ENCODE measurements at regions of chr9 and their contacts with region 1.

Region 1: GRCh38 chr9:89597711-89598625 is 6.8 kb upstream of the GADD45G start:
- DNase-seq: peak in 1 of 2 experiments; percentile 82
- H3K4me3 ChIP-seq: no peak overlapping the region
- H3K27ac ChIP-seq: no peak overlapping the region
- H3K4me1 ChIP-seq: peaks cover 4 to 10% (median 6%) of the 10 kb centered on the region in 4 experiments
- H3K27me3 ChIP-seq: no peaks in the 10 kb centered on the region
- CTCF ChIP-seq: peak; percentile 68 to 92 (median 92)
- EP300 ChIP-seq: no peak
- POLR2A ChIP-seq: no peak
- RAD21 ChIP-seq: peak; percentile 99 to 100

Region 2: GRCh38 chr9:89496645-89497256 is 101.2 kb before region 1 on chr9:
- CTCF ChIA-PET with region 1: no interaction called
- POLR2A ChIA-PET with region 1: no interaction called
- DNase-seq: no peak
- H3K4me3 ChIP-seq: peak overlapping the region; percentile 55 to 90 (median 66)
- H3K27ac ChIP-seq: no peak overlapping the region
- H3K4me1 ChIP-seq: peaks cover 14 to 49% (median 31%) of the 10 kb centered on the region in 4 experiments
- H3K27me3 ChIP-seq: no peaks in the 10 kb centered on the region
- CTCF ChIP-seq: no peak
- EP300 ChIP-seq: no peak
- POLR2A ChIP-seq: no peak
- RAD21 ChIP-seq: no peak

Region 3: DNA sequence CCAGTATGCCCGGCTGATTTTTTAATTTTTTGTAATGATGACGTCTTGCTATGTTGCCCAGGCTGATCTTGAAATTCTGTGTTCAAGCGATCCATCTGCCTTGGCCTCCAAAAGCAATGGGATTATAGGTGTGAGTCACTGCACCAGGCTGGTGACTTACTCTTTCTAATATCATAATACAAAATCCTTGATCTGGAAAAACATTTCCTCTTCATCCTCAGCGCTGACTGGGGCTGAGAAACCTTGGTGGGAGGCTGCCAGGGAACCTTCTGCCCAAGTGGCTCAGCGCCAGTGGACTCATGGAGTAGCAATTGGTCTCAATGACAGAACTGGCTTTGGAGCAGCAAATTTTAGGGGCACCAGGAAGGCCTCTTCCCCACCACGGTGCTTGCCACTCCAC is 82.6 kb before region 1 on chr9:
- CTCF ChIA-PET with region 1: no interaction called
- POLR2A ChIA-PET with region 1: no interaction called
- DNase-seq: no peak
- H3K4me3 ChIP-seq: no peak overlapping the region
- H3K27ac ChIP-seq: no peak overlapping the region
- H3K4me1 ChIP-seq: no peaks in the 10 kb centered on the region
- H3K27me3 ChIP-seq: no peaks in the 10 kb centered on the region
- CTCF ChIP-seq: no peak
- EP300 ChIP-seq: no peak
- POLR2A ChIP-seq: no peak
- RAD21 ChIP-seq: no peak

Region 4: GRCh38 chr9:89564352-89564878 is 33.6 kb before region 1 on chr9:
- CTCF ChIA-PET with region 1: interaction called, 36 read pairs
- POLR2A ChIA-PET with region 1: no interaction called
- DNase-seq: peak; percentile 46 to 68
- H3K4me3 ChIP-seq: no peak overlapping the region
- H3K27ac ChIP-seq: no peak overlapping the region
- H3K4me1 ChIP-seq: peaks cover 0 to 3% (median 1%) of the 10 kb centered on the region in 4 experiments; a peak in 3 of 7 replicates
- H3K27me3 ChIP-seq: no peaks in the 10 kb centered on the region
- CTCF ChIP-seq: peak; percentile 54 to 82 (median 71)
- EP300 ChIP-seq: no peak
- POLR2A ChIP-seq: no peak
- RAD21 ChIP-seq: peak; percentile 38 to 53

Region 5: GRCh38 chr9:89623925-89624420 is 26.0 kb after region 1 on chr9:
- CTCF ChIA-PET with region 1: interaction called, 65 read pairs
- POLR2A ChIA-PET with region 1: interaction called, 107 read pairs
- DNase-seq: no peak
- H3K4me3 ChIP-seq: no peak overlapping the region
- H3K27ac ChIP-seq: no peak overlapping the region
- H3K4me1 ChIP-seq: peaks cover 0 to 17% (median under 1%) of the 10 kb centered on the region in 4 experiments; a peak in 5 of 7 replicates
- H3K27me3 ChIP-seq: no peaks in the 10 kb centered on the region; a peak in 3 of 7 replicates
- CTCF ChIP-seq: no peak
- EP300 ChIP-seq: no peak
- POLR2A ChIP-seq: no peak
- RAD21 ChIP-seq: no peak

Region 6: DNA sequence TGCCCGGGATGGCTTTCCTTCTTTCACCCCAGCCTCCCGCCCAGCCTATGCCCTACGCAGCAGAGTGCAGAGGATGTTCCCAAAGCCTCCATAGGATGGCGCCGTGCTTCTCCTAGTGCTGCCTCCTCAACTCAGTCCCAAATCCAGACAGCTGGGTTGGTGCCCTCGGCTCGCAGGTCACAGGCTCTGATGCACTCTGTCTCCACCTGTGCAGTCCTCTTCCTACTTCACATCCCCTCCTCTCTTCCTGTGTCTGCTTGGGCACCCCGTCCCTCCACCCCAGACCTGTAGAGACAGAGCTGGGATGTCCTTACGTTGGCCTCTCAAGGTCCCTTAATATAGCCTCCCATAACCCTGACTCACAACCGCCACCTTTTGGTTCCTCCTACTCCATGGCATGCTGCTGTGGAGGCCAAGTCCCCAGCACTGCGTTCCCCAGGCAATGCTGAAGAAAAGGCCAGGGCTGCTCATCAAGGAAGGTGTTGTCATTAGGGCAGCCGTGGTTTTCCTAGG is 321.3 kb after region 1 on chr9:
- CTCF ChIA-PET with region 1: interaction called, 45 read pairs
- POLR2A ChIA-PET with region 1: interaction called, 4 read pairs
- DNase-seq: peak; percentile 49 to 86
- H3K4me3 ChIP-seq: no peak overlapping the region
- H3K27ac ChIP-seq: no peak overlapping the region
- H3K4me1 ChIP-seq: peaks cover 0 to 4% (median 0%) of the 10 kb centered on the region in 4 experiments; a peak in 1 of 7 replicates
- H3K27me3 ChIP-seq: no peaks in the 10 kb centered on the region; a peak in 1 of 7 replicates
- CTCF ChIP-seq: peak; percentile 55 to 83 (median 77)
- EP300 ChIP-seq: no peak
- POLR2A ChIP-seq: no peak
- RAD21 ChIP-seq: peak; percentile 48 to 60

Region 7: DNA sequence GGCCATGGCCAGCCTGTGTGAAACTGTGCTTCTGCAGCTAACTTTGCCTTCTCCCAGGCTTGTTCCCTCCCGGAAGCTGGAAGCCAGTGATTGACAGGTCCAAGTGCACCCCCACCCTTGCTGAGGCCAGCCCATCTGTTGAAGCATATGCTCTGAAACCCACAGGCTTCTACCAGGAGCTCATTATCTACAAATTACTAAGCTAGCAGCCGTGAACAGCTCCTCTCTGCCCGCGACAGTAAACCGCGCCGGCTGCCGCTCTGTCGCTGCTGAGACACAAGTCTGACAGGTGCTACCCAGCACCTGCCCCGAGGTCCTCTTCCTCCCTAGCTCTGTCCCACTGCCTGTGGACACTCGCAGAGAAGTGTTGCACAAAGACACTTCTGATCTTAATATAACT is 497.7 kb after region 1 on chr9:
- CTCF ChIA-PET with region 1: interaction called, 162 read pairs
- POLR2A ChIA-PET with region 1: interaction called, 8 read pairs
- DNase-seq: no peak
- H3K4me3 ChIP-seq: no peak overlapping the region
- H3K27ac ChIP-seq: no peak overlapping the region
- H3K4me1 ChIP-seq: peaks cover 0 to 3% (median 0%) of the 10 kb centered on the region in 4 experiments; a peak in 1 of 7 replicates
- H3K27me3 ChIP-seq: no peaks in the 10 kb centered on the region; a peak in 1 of 7 replicates
- CTCF ChIP-seq: no peak
- EP300 ChIP-seq: no peak
- POLR2A ChIP-seq: no peak
- RAD21 ChIP-seq: no peak

Region 8: DNA sequence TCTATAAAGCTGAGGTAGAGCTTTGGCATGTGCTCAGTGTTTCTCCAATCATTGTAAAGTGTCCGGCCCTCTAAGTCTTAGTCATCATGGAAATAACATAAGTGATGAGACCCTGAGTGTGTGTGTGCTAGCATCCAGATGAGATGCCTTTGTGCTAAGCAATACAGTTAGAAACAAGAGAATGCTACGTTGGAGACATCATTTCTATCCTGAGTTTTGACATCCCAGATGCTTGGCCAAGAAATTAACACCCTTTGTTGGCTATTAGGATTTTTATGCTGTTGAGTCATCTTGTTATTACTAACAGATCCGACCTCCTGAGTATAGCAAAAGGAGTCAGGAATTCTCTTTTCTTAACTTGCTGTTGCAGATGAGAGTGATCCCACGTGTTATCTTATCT is 514.8 kb after region 1 on chr9:
- CTCF ChIA-PET with region 1: interaction called, 149 read pairs
- POLR2A ChIA-PET with region 1: no interaction called
- DNase-seq: no peak
- H3K4me3 ChIP-seq: no peak overlapping the region
- H3K27ac ChIP-seq: no peak overlapping the region
- H3K4me1 ChIP-seq: no peaks in the 10 kb centered on the region
- H3K27me3 ChIP-seq: no peaks in the 10 kb centered on the region
- CTCF ChIP-seq: no peak
- EP300 ChIP-seq: no peak
- POLR2A ChIP-seq: no peak
- RAD21 ChIP-seq: no peak

Measured in H1 (cell line).